OCI-LY7 (cell line): ENCODE measurements at regions of chr2 and their contacts with region 1.

Region 1: GRCh38 chr2:213251618-213252017 is 32.6 kb upstream of the SPAG16 start:
- DNase-seq: peak; percentile 83
- H3K4me3 ChIP-seq: no peak overlapping the region
- H3K27ac ChIP-seq: no peak overlapping the region
- H3K4me1 ChIP-seq: peaks cover 10% of the 10 kb centered on the region
- CTCF ChIP-seq: peak; percentile 85

Region 2: GRCh38 chr2:212777020-212777491 is 474.6 kb before region 1 on chr2:
- CTCF ChIA-PET with region 1: no interaction called
- POLR2A ChIA-PET with region 1: no interaction called
- intact Hi-C with region 1: loop called (anchors 10 kb)
- DNase-seq: peak; percentile 50
- H3K4me3 ChIP-seq: no peak overlapping the region
- H3K27ac ChIP-seq: no peak overlapping the region
- H3K4me1 ChIP-seq: peaks cover 4% of the 10 kb centered on the region
- CTCF ChIP-seq: peak; percentile 86

Region 3: DNA sequence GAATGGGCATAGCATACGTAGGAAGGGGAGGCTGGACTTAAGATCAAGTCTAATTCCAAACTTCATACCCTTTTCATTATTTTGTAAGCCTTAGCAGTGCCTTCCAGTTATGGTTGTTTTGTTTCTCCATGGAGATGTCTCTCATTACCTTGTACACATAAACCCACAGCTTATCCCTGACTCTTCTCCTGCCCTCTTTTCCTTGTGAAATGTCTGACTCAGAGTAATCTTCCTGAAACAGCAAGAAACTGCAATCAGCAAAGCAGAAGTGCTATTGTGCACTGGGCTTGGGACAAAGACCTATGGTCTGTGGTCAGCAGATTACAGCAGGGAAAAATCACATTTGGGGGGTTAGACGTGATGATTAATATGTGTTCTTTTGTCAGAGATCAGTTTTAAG is 276.9 kb before region 1 on chr2:
- CTCF ChIA-PET with region 1: no interaction called
- POLR2A ChIA-PET with region 1: no interaction called
- intact Hi-C with region 1: no loop called
- DNase-seq: no peak
- H3K4me3 ChIP-seq: no peak overlapping the region
- H3K27ac ChIP-seq: no peak overlapping the region
- H3K4me1 ChIP-seq: no peaks in the 10 kb centered on the region
- CTCF ChIP-seq: no peak

Region 4: DNA sequence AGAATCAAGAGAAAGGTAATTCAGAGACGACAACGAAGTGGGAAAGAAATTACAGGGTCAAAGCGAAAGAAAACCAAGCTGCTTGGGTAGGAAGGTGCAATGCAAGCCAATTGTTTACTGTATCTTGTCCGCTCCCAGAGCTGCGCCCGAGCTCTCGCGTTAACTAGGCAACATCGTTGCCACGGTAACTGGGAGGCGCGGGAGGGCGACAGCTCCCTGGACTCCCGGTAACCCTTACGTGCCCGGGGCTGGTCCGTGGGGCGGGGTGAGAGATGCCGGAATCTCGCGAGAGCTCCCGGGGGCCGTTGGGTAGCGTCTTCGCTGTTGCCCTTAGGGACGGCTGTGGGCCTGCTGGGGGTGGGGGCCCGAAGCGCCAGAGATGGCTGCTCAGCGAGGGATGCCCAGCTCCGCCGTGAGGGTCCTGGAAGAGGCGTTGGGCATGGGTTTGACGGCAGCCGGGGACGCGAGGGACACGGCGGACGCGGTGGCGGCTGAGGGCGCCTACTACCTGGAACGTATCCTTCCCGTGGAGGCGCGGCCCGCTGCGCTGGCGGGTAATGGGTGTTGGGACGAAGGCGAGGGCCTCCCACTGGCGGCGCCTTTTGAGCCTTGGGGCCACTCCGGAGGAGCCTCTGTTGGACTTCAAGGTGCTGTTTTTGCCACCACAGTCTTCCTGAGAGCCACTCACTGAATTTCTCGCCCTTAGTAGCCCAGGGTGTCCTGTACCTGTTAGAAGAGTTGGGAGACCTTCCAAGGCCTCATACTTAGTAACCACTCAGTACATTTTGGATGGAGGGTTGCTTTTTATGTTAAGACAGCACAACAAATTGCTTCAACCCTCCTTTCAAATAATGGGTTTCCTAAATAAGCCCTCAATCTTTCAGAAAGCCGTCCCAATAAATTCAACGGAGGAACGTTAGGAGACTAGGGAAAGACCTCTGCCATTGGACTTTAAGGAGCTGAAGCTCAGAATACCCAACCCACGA is 32.8 kb after region 1 on chr2 and contains the start of gene SPAG16:
- CTCF ChIA-PET with region 1: no interaction called
- POLR2A ChIA-PET with region 1: interaction called, 7 read pairs
- intact Hi-C with region 1: loop called (anchors 5 kb)
- DNase-seq: peak; percentile 99
- H3K4me3 ChIP-seq: peak within 1 kb of the TSS; percentile 85
- H3K27ac ChIP-seq: peak within 1 kb of the TSS; percentile 27
- H3K4me1 ChIP-seq: peaks cover 23% of the 10 kb centered on the region
- CTCF ChIP-seq: no peak; the same call in 1 of the 2 replicates
- total RNA-seq, gene SPAG16: 16.6 and 24.2 TPM in 2 replicates

Region 5: DNA sequence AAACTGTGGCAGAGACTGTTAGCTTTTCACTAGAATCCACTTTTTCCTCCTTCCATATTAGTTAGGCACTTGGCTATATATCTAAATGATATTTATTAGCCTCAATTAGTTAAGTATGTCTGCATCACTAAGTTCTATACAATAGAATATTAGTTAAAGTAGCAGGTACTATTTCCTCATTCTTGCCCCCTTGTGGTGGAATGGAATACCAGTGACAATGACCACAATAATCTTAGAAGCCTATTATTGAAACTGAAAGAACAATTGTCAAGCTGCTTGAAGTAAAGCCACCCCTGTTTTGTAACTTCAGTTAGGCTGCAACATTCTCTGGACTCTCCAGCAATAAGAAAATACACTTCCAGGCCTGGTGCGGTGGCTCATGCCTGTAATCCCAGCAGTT is 682.9 kb after region 1 on chr2:
- CTCF ChIA-PET with region 1: no interaction called
- POLR2A ChIA-PET with region 1: no interaction called
- intact Hi-C with region 1: loop called (anchors 1 kb)
- DNase-seq: peak; percentile 54
- H3K4me3 ChIP-seq: no peak overlapping the region
- H3K27ac ChIP-seq: no peak overlapping the region
- H3K4me1 ChIP-seq: no peaks in the 10 kb centered on the region
- CTCF ChIP-seq: peak; percentile 80

Region 6: DNA sequence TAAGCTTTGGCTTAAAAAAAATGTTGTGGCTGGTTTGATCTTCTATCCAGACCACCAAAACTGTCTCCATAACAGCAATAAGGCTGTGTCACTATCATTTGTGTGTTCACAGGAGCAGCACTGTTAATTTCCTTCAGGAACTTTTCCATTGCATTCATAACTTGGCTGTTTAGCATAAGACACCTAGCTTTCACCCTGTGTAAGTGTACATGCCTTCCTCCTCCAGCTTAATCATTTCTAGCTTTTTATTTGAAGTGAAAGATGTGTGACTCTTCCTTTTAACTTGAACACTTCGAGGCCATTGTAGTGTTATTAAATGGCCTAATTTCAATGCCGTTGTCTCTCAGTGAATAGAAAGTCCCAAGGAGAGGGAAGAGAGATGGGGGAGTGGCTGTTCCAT is 806.4 kb after region 1 on chr2:
- CTCF ChIA-PET with region 1: no interaction called
- POLR2A ChIA-PET with region 1: no interaction called
- intact Hi-C with region 1: no loop called
- DNase-seq: no peak
- H3K4me3 ChIP-seq: no peak overlapping the region
- H3K27ac ChIP-seq: no peak overlapping the region
- H3K4me1 ChIP-seq: no peaks in the 10 kb centered on the region
- CTCF ChIP-seq: no peak